ENCODE measurements at regions of chrX and their contacts with region 1.

Region 1: GRCh38 chrX:144327495-144327894 is 443.6 kb downstream of the UBE2NL start:
- DNase-seq: no peak
- ATAC-seq: no peak
- H3K4me3 ChIP-seq: no peak overlapping the region
- H3K27ac ChIP-seq: no peak overlapping the region
- H3K4me1 ChIP-seq: no peaks in the 10 kb centered on the region
- H3K27me3 ChIP-seq: no peaks in the 10 kb centered on the region
- CTCF ChIP-seq: no peak
- POLR2A ChIP-seq: no peak

Region 2: DNA sequence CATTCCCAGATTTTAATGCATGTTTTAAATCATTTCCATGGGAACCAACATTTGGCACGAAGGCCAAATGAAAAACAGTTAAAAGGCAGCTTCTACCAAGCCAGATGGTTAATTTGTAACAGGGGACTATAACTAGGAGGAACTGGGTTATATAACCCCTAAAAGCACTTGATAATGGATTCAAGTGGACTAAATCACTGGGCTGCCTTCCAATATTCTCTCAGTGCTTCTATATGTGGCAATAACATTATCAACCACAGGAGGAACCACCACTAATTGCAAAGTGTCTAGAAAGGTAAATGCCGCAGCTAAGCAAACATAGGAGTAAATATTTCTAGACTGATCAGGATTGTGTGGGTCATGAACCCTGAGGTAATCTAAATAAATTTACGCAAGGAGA is 52.1 kb before region 1 on chrX:
- intact Hi-C with region 1: no loop called
- DNase-seq: no peak
- ATAC-seq: no peak
- H3K4me3 ChIP-seq: no peak overlapping the region
- H3K27ac ChIP-seq: no peak overlapping the region
- H3K4me1 ChIP-seq: no peaks in the 10 kb centered on the region
- H3K27me3 ChIP-seq: no peaks in the 10 kb centered on the region
- CTCF ChIP-seq: no peak
- POLR2A ChIP-seq: no peak

Region 3: GRCh38 chrX:144946666-144947065 is 619.2 kb after region 1 on chrX:
- intact Hi-C with region 1: loop called in 1 of 10 experiments (anchors 10 kb)
- DNase-seq: no peak
- ATAC-seq: no peak
- H3K4me3 ChIP-seq: no peak overlapping the region
- H3K27ac ChIP-seq: no peak overlapping the region
- H3K4me1 ChIP-seq: no peaks in the 10 kb centered on the region
- H3K27me3 ChIP-seq: no peaks in the 10 kb centered on the region
- CTCF ChIP-seq: no peak
- POLR2A ChIP-seq: no peak

Measured in heart left ventricle (tissue), 16 donors.